Adrenal gland (tissue), 19 donors: ENCODE measurements at regions of chr11 and their contacts with region 1.

Region 1: GRCh38 chr11:59615637-59616395 is at the start of gene OSBP:
- DNase-seq: peak; percentile 99 to 100 (median 100)
- H3K4me3 ChIP-seq: peak within 1 kb of the TSS; percentile 43 to 83 (median 72)
- H3K27ac ChIP-seq: peak within 1 kb of the TSS; percentile 60 to 97 (median 91)
- H3K4me1 ChIP-seq: peaks cover 17 to 40% of the 10 kb centered on the region in 2 donors
- H3K27me3 ChIP-seq: no peaks in the 10 kb centered on the region
- CTCF ChIP-seq: no peak
- POLR2A ChIP-seq: peak; percentile 84 to 94
- total RNA-seq, gene OSBP: 44.0 to 117 (median 85.4) TPM

Region 2: DNA sequence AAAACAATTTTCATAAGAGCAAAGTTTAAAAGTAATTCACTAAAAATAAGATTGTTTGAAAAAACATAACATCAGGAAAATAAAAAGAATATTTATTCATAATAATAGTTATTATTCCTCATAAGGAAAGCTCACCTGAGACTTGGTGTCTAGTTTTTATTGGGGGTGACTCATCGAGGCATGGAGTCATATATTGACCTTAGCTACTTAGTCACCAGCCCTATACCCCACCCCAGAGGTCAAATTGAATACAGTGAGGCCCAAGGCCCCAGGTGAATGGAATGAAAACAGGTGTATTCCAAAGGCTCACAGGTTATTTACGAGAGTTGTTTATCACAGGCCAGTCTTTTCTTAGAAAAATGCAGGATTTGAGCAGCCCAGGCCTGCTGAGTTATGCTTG is 956.4 kb before region 1 on chr11:
- intact Hi-C with region 1: no loop called
- DNase-seq: no peak
- H3K4me3 ChIP-seq: no peak overlapping the region
- H3K27ac ChIP-seq: no peak overlapping the region
- H3K4me1 ChIP-seq: no peaks in the 10 kb centered on the region
- H3K27me3 ChIP-seq: peaks cover 5% of the 10 kb centered on the region
- CTCF ChIP-seq: no peak
- POLR2A ChIP-seq: no peak

Region 3: DNA sequence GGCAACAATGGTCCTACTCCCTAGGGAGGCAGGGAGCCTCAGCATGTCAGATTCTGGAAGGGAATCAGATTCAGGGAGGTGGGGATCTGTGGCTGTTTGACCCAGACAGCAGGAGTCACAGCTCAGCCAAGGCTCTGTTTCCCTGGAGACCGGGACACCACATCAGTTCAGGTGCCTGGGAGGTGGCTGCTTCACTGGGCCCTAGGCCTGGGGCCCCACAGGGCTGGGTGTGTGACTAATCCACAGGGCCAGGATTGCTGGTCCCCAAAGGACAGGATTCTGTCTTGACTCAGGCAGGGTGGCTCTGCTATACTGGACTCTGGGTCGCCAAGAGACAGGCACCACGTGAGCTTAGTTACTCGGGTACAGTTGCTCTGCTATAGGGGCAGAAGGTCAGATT is 260.6 kb before region 1 on chr11:
- intact Hi-C with region 1: no loop called
- DNase-seq: no peak
- H3K4me3 ChIP-seq: no peak overlapping the region
- H3K27ac ChIP-seq: no peak overlapping the region
- H3K4me1 ChIP-seq: no peaks in the 10 kb centered on the region
- H3K27me3 ChIP-seq: peaks cover 6% of the 10 kb centered on the region
- CTCF ChIP-seq: no peak
- POLR2A ChIP-seq: no peak

Region 4: GRCh38 chr11:59463190-59463641 is 152.6 kb before region 1 on chr11:
- intact Hi-C with region 1: no loop called
- DNase-seq: peak in 3 of 7 donors; percentile 7 to 27 (median 25)
- H3K4me3 ChIP-seq: no peak overlapping the region
- H3K27ac ChIP-seq: no peak overlapping the region
- H3K4me1 ChIP-seq: no peaks in the 10 kb centered on the region
- H3K27me3 ChIP-seq: no peaks in the 10 kb centered on the region
- CTCF ChIP-seq: no peak
- POLR2A ChIP-seq: no peak

Region 5: DNA sequence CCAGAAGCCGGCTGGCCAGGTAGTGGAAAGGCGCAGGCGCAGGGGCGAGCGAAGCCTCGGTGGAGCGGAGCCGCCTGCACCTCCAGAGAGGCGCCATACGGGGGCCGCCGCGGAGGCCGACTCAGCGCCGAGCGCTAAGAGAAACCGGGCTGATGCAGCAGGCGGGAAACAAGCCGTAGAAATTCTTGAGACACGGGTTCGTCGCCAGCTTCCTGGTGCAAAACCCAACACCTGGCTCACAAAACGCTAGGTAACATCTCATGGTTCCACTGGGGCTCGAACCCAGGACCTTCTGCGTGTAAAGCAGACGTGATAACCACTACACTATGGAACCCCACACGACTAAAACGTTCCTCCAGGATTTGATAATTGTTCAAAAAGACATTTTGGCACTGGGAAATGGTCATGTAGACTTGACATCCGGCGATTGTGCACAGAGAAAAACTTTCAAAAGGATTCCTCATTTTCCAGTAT is 65.4 kb before region 1 on chr11:
- intact Hi-C with region 1: loop called in 1 of 2 experiments (anchors 5 kb)
- DNase-seq: peak; percentile 79 to 96 (median 86)
- H3K4me3 ChIP-seq: peak overlapping the region in 2 of 4 donors; percentile 37 to 48
- H3K27ac ChIP-seq: peak overlapping the region; percentile 73 to 91 (median 88)
- H3K4me1 ChIP-seq: peaks cover 11 to 35% of the 10 kb centered on the region in 2 donors
- H3K27me3 ChIP-seq: no peaks in the 10 kb centered on the region
- CTCF ChIP-seq: peak; percentile 15 to 70 (median 50)
- POLR2A ChIP-seq: peak; percentile 3 to 23